ENCODE measurements at regions of chr9 and their contacts with region 1.

Region 1: DNA sequence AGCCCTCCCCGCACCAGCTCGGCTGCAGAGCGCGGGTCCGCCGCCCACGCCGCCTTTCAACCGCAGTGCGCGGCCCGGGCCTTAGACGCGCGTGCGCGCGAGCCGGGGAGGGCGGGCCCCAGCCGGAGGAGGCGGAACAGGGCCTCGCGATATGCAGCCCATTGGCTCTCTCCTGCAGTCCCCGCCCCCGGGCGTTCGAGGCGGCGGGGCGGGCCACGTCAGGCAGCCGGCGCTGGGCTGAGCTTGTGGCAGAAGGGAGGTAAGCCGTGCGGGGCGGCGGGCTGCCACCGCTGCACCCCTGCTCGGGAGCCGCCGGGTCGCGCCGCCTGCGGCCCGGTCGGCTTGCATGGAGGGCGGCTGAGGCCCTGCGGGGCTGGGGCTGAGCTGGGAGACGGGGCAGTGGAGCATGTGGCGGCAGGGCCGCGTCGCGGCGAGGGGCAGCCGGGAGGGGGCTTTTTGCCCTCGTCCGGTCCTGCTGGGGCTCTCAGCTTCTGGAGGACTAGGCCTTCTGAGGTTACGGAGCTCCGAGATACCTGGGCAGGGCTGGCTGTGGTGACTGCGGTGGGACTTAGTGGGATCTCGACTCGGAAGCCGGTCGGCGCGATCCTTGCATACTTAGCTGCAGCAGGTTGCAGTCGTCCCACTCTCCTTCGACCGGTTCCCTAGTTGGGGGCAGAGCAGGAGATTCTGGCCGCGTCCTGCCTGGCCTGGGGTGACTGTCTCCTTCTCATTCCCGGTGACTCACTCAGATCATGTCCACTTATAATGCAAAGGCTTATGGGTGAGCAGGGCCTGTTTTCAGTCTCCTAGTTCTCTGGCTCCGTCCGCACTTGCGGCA is at the start of gene FOCAD:
- DNase-seq: peak; percentile 72
- ATAC-seq: peak; percentile 99
- H3K4me3 ChIP-seq: peak within 1 kb of the TSS; percentile 78
- H3K27ac ChIP-seq: peak within 1 kb of the TSS; percentile 79
- H3K4me1 ChIP-seq: peaks cover 5% of the 10 kb centered on the region; the same call in 1 of the 2 replicates
- H3K27me3 ChIP-seq: no peaks in the 10 kb centered on the region
- CTCF ChIP-seq: no peak
- EP300 ChIP-seq: no peak
- POLR2A ChIP-seq: peak; percentile 98
- RAD21 ChIP-seq: 0 out of 2 replicates have a peak, but pooled peaks have one; percentile 2
- polyA plus RNA-seq, gene FOCAD: 13.7 to 17.5 TPM

Region 2: GRCh38 chr9:20518735-20519134 is 165.5 kb before region 1 on chr9:
- CTCF ChIA-PET with region 1: no interaction called
- POLR2A ChIA-PET with region 1: no interaction called
- RAD21 ChIA-PET with region 1: no interaction called
- SMC1A ChIA-PET with region 1: no interaction called
- in situ Hi-C with region 1: no loop called
- intact Hi-C with region 1: no loop called
- DNase-seq: no peak
- ATAC-seq: no peak
- H3K4me3 ChIP-seq: no peak overlapping the region
- H3K27ac ChIP-seq: no peak overlapping the region
- H3K4me1 ChIP-seq: peaks cover 4% of the 10 kb centered on the region
- H3K27me3 ChIP-seq: no peaks in the 10 kb centered on the region
- CTCF ChIP-seq: no peak
- EP300 ChIP-seq: no peak
- POLR2A ChIP-seq: no peak
- RAD21 ChIP-seq: no peak

Region 3: GRCh38 chr9:20640331-20641187 is 43.7 kb before region 1 on chr9:
- CTCF ChIA-PET with region 1: interaction called, 8 read pairs
- POLR2A ChIA-PET with region 1: interaction called, 16 read pairs
- RAD21 ChIA-PET with region 1: interaction called, 76 read pairs
- SMC1A ChIA-PET with region 1: interaction called, 32 read pairs
- in situ Hi-C with region 1: no loop called
- intact Hi-C with region 1: loop called (anchors 1 kb)
- DNase-seq: peak; percentile 99
- ATAC-seq: peak; percentile 96
- H3K4me3 ChIP-seq: no peak overlapping the region
- H3K27ac ChIP-seq: peak overlapping the region; percentile 73
- H3K4me1 ChIP-seq: peaks cover 13% of the 10 kb centered on the region
- H3K27me3 ChIP-seq: no peaks in the 10 kb centered on the region
- CTCF ChIP-seq: no peak
- EP300 ChIP-seq: peak; percentile 67 to 90; a peak in 3 of 4 replicates
- POLR2A ChIP-seq: peak; percentile 46; the same call in 1 of the 2 replicates
- RAD21 ChIP-seq: peak; percentile 11; the same call in 1 of the 2 replicates

Region 4: DNA sequence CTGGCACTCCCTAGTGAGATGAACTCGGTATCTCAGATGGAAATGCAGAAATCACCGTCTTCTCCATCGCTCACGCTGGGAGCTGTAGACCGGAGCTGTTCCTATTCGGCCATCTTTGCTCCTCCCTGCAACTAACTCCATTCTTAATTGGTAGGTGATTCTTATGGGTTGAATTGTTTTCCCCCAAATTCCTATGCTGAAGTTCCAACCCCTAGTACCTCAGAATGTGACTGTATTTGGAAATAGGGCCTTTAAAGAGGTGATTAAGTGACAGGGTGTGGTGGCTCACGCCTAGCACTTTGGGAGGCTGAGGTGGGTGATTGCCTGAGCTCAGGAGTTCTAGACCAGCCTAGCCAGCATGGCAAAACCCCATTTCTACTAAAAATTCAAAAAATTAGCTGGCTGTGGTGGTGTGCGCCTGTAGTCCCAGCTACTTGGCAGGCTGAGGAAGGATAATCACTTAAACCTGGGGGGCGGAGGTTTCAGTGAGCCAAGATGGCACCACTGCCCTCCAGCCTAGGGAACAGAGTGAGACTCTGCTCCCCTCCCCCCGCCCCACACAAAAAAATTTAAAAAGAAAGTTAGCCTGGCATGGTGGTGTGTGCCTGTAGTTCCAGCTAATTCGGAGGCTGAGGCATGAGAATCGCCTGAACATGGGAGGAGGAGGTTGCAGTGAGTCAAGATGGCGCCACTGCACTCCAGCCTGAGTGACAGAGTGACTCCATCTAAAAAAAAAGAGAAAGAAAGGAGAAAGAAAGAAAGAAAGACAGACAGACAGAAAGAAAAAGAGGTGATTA is 25.4 kb before region 1 on chr9:
- CTCF ChIA-PET with region 1: interaction called, 11 read pairs
- POLR2A ChIA-PET with region 1: interaction called, 37 read pairs
- RAD21 ChIA-PET with region 1: interaction called, 25 read pairs
- SMC1A ChIA-PET with region 1: interaction called, 50 read pairs
- in situ Hi-C with region 1: no loop called
- intact Hi-C with region 1: loop called (anchors 1 kb)
- DNase-seq: no peak
- ATAC-seq: peak; percentile 56
- H3K4me3 ChIP-seq: peak overlapping the region; percentile 76
- H3K27ac ChIP-seq: peak overlapping the region; percentile 88
- H3K4me1 ChIP-seq: no peaks in the 10 kb centered on the region
- H3K27me3 ChIP-seq: no peaks in the 10 kb centered on the region
- CTCF ChIP-seq: no peak
- EP300 ChIP-seq: no peak
- POLR2A ChIP-seq: no peak
- RAD21 ChIP-seq: no peak

Region 5: GRCh38 chr9:20664501-20664900 is 19.8 kb before region 1 on chr9:
- CTCF ChIA-PET with region 1: interaction called, 11 read pairs
- POLR2A ChIA-PET with region 1: interaction called, 37 read pairs
- RAD21 ChIA-PET with region 1: interaction called, 25 read pairs
- SMC1A ChIA-PET with region 1: interaction called, 50 read pairs
- in situ Hi-C with region 1: no loop called
- intact Hi-C with region 1: loop called (anchors 1 kb)
- DNase-seq: no peak
- ATAC-seq: no peak
- H3K4me3 ChIP-seq: no peak overlapping the region
- H3K27ac ChIP-seq: no peak overlapping the region
- H3K4me1 ChIP-seq: no peaks in the 10 kb centered on the region
- H3K27me3 ChIP-seq: no peaks in the 10 kb centered on the region
- CTCF ChIP-seq: no peak
- EP300 ChIP-seq: no peak
- POLR2A ChIP-seq: no peak
- RAD21 ChIP-seq: no peak

Region 6: GRCh38 chr9:20670395-20670794 is 13.9 kb before region 1 on chr9:
- CTCF ChIA-PET with region 1: interaction called, 7 read pairs
- POLR2A ChIA-PET with region 1: interaction called, 12 read pairs
- RAD21 ChIA-PET with region 1: interaction called, 13 read pairs
- SMC1A ChIA-PET with region 1: interaction called, 31 read pairs
- in situ Hi-C with region 1: no loop called
- intact Hi-C with region 1: loop called (anchors 2 kb)
- DNase-seq: no peak
- ATAC-seq: no peak; the same call in 2 of the 3 replicates
- H3K4me3 ChIP-seq: no peak overlapping the region
- H3K27ac ChIP-seq: no peak overlapping the region
- H3K4me1 ChIP-seq: no peaks in the 10 kb centered on the region
- H3K27me3 ChIP-seq: no peaks in the 10 kb centered on the region
- CTCF ChIP-seq: no peak
- EP300 ChIP-seq: no peak
- POLR2A ChIP-seq: no peak
- RAD21 ChIP-seq: no peak

Region 7: DNA sequence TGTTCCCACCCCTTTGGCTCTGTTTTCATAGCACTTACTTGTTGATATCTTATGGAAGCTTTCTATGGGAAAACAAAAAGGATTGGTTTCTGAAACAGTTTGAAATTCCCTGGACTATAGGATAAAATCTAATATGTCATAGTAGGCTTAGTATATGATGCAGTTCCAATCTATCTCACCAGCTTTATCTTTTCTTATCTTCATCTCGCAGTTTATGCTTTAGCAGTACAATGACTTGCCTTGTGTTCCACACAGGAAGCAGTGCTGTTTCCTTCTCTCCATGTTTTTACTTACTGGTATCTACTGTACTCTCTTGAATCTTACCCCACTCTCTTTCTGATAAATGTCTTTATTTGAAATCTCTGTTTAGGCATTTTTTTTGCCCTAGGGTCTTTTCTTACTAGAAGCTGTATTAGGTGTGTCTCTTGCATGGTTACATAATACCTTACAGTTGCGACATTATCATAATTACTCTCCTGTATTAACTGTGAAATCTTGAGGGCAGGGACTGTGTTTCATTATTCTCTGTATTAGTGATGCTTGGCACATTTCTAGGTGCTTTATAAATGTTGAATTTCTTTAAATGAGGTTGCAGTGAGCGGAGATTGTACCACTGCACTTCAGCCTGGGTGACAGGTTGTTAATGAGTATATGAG is 76.1 kb after region 1 on chr9:
- CTCF ChIA-PET with region 1: no interaction called
- POLR2A ChIA-PET with region 1: no interaction called
- RAD21 ChIA-PET with region 1: no interaction called
- SMC1A ChIA-PET with region 1: no interaction called
- in situ Hi-C with region 1: no loop called
- intact Hi-C with region 1: no loop called
- DNase-seq: no peak
- ATAC-seq: no peak
- H3K4me3 ChIP-seq: no peak overlapping the region
- H3K27ac ChIP-seq: no peak overlapping the region
- H3K4me1 ChIP-seq: no peaks in the 10 kb centered on the region
- H3K27me3 ChIP-seq: no peaks in the 10 kb centered on the region
- CTCF ChIP-seq: no peak
- EP300 ChIP-seq: no peak
- POLR2A ChIP-seq: no peak
- RAD21 ChIP-seq: no peak